Naive thymus-derived CD8-positive, alpha-beta T cell (primary cell): ENCODE measurements at regions of chr17 and their contacts with region 1.

Region 1: DNA sequence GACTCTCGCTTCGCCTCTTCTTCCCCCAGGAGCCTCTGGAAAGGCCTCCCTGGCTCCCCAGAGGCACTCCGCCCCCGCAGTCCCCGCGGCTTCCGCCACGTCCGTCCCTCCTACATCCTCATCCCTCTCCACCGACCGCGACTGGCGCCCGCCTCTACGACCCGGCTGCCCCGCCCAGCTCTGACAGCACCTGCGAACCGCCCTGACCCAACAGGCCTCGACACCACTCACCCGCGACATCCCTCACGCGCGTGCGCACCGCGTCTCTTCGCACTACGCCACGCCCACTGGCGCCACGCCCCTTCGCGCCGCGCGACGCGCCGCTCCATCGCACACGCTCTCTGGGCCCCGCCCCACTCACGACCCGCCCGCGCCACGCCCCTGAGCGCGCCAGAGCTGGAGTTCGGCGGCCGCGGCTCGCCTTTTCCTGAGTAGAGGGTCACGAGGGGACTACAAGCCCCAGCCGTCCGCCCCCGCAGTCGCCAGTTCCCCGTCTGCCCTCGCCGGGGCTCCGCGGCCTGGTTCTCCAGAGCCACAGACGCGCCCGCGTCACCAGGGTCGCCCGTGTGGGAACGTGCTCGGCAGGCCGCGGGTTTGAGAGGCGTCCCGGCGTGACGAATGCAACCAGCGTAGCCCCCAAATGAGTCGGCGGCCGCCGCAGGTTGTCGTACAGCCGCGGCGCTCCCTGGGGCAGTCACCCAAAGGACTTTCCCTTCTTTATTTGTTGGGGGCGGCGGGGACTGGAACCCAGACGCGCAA is 56.2 kb upstream of the LRRC37A3 start:
- DNase-seq: peak; percentile 94 to 98 (median 96)
- ATAC-seq: peak; percentile 76 to 82
- H3K4me3 Mint-ChIP-seq: peak overlapping the region; percentile 90 to 98 (median 96)
- H3K27ac Mint-ChIP-seq: peak overlapping the region; percentile 95 to 100 (median 99)
- H3K4me1 Mint-ChIP-seq: peaks cover 9 to 52% (median 34%) of the 10 kb centered on the region in 4 donors
- H3K27me3 Mint-ChIP-seq: peaks cover 0 to 2% (median 0%) of the 10 kb centered on the region in 5 donors

Region 2: GRCh38 chr17:64920026-64920418 is 55.5 kb before region 1 on chr17:
- POLR2A ChIA-PET with region 1: interaction called, 12 read pairs
- DNase-seq: no peak
- ATAC-seq: peak in 1 of 2 donors; percentile 5
- H3K4me3 Mint-ChIP-seq: peak overlapping the region; percentile 85 to 96 (median 89)
- H3K27ac Mint-ChIP-seq: peak overlapping the region; percentile 77 to 98 (median 96)
- H3K4me1 Mint-ChIP-seq: peaks cover 1 to 31% (median 8%) of the 10 kb centered on the region in 4 donors
- H3K27me3 Mint-ChIP-seq: no peaks in the 10 kb centered on the region

Region 3: DNA sequence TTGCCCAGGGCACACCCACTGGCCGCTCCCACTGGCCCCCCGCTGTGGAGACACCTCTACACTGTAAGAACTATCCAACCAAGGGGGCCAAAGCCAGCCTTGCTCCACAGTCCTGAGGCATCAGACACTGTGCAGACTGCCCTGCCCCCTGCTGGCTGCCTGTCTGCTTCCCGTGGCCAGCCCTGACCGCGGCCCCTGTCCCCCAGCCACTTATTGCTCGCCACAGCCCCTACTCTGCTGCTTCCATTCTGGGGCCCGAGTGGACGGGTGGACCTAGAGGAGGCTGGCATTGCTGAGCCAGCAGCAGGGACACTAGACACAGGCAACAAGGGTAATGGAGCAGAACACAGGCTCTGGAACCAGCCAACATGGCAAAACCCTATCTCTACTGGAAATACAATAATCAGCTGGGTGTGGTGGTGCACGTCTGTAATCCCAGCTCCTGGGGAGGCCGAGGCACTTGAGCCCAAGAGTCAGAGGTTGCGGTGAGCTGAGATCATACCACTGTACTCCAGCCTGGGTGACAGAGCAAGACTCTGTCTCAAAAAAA is 36.5 kb before region 1 on chr17:
- POLR2A ChIA-PET with region 1: no interaction called
- DNase-seq: peak in 5 of 10 donors; percentile 12 to 34 (median 16)
- ATAC-seq: peak; percentile 46 to 54
- H3K4me3 Mint-ChIP-seq: no peak overlapping the region
- H3K27ac Mint-ChIP-seq: no peak overlapping the region
- H3K4me1 Mint-ChIP-seq: peaks cover 0 to 13% (median 3%) of the 10 kb centered on the region in 4 donors
- H3K27me3 Mint-ChIP-seq: peaks cover 0 to 11% (median 0%) of the 10 kb centered on the region in 5 donors

Region 4: GRCh38 chr17:64950871-64951270 is 24.6 kb before region 1 on chr17:
- POLR2A ChIA-PET with region 1: no interaction called
- DNase-seq: no peak
- ATAC-seq: no peak
- H3K4me3 Mint-ChIP-seq: no peak overlapping the region
- H3K27ac Mint-ChIP-seq: no peak overlapping the region
- H3K4me1 Mint-ChIP-seq: no peaks in the 10 kb centered on the region
- H3K27me3 Mint-ChIP-seq: no peaks in the 10 kb centered on the region

Region 5: DNA sequence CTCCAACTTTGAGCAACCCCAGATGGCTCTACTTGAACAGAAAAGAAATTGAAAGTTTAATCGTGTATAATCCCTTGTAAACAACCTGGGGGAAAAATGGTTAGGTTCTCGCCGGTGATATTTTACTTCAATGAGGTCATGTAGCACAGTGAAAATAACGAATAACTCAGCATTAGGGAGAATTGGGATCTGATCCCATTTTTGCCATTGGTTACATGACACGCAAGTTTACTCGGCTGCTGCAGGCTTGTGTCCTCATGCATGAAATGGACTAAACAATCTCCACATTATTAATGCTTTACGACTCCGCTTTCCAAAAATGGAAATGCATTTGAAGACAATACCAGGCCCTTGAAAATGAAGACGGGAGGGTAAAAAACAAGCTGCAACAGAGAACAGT is 10.7 kb before region 1 on chr17:
- POLR2A ChIA-PET with region 1: interaction called, 11 read pairs
- DNase-seq: no peak
- ATAC-seq: no peak
- H3K4me3 Mint-ChIP-seq: peak overlapping the region in 3 of 10 donors; percentile 39 to 73 (median 53)
- H3K27ac Mint-ChIP-seq: peak overlapping the region in 7 of 10 donors; percentile 43 to 96 (median 59)
- H3K4me1 Mint-ChIP-seq: peaks cover 24 to 69% (median 57%) of the 10 kb centered on the region in 4 donors
- H3K27me3 Mint-ChIP-seq: no peaks in the 10 kb centered on the region

Region 6: GRCh38 chr17:64998436-64999190 is 23.1 kb after region 1 on chr17:
- POLR2A ChIA-PET with region 1: no interaction called
- DNase-seq: no peak
- ATAC-seq: no peak
- H3K4me3 Mint-ChIP-seq: no peak overlapping the region
- H3K27ac Mint-ChIP-seq: no peak overlapping the region
- H3K4me1 Mint-ChIP-seq: peaks cover 0 to 6% (median 3%) of the 10 kb centered on the region in 4 donors
- H3K27me3 Mint-ChIP-seq: no peaks in the 10 kb centered on the region

Region 7: GRCh38 chr17:65022751-65023700 is 47.5 kb after region 1 on chr17:
- POLR2A ChIA-PET with region 1: no interaction called
- DNase-seq: no peak
- ATAC-seq: no peak
- H3K4me3 Mint-ChIP-seq: peak overlapping the region in 6 of 10 donors; percentile 24 to 69 (median 42)
- H3K27ac Mint-ChIP-seq: peak overlapping the region in 9 of 10 donors; percentile 13 to 77 (median 66)
- H3K4me1 Mint-ChIP-seq: peaks cover 23 to 94% (median 78%) of the 10 kb centered on the region in 4 donors
- H3K27me3 Mint-ChIP-seq: no peaks in the 10 kb centered on the region

Region 8: DNA sequence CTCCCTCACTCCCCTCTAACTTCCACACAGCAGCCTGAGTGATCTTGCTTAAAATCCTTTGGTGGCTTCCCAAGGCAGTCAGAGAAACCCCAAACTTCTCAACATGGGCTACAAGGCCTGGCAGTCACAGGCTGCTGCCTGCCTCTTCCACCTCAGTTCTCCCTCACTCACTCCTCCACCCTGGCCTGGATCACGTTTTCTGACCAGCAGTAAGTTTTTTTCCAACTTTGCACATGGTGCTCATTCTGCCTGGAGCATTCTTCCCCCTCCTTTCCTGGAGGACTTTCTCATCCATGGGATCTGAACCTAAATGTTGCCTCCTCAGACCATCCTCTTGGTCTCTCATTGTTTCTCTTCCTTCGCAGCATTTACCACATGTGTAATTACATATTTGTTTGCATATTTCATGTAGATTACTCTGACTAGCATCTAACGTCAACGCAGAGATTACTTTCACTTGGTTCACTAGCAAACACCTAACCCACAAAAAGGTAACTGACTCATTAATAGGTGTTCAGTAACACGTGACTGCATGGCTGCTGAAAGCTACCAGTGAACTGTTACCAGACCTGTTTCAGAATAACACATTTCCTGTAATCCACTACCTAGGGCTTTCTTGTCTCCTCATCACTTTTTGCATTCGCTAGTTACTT is 64.0 kb after region 1 on chr17:
- POLR2A ChIA-PET with region 1: interaction called, 16 read pairs
- DNase-seq: peak in 9 of 10 donors; percentile 36 to 75 (median 54)
- ATAC-seq: peak; percentile 92 to 95
- H3K4me3 Mint-ChIP-seq: peak overlapping the region; percentile 55 to 86 (median 76)
- H3K27ac Mint-ChIP-seq: peak overlapping the region; percentile 90 to 99 (median 94)
- H3K4me1 Mint-ChIP-seq: peaks cover 38 to 96% (median 78%) of the 10 kb centered on the region in 4 donors
- H3K27me3 Mint-ChIP-seq: no peaks in the 10 kb centered on the region

Region 9: DNA sequence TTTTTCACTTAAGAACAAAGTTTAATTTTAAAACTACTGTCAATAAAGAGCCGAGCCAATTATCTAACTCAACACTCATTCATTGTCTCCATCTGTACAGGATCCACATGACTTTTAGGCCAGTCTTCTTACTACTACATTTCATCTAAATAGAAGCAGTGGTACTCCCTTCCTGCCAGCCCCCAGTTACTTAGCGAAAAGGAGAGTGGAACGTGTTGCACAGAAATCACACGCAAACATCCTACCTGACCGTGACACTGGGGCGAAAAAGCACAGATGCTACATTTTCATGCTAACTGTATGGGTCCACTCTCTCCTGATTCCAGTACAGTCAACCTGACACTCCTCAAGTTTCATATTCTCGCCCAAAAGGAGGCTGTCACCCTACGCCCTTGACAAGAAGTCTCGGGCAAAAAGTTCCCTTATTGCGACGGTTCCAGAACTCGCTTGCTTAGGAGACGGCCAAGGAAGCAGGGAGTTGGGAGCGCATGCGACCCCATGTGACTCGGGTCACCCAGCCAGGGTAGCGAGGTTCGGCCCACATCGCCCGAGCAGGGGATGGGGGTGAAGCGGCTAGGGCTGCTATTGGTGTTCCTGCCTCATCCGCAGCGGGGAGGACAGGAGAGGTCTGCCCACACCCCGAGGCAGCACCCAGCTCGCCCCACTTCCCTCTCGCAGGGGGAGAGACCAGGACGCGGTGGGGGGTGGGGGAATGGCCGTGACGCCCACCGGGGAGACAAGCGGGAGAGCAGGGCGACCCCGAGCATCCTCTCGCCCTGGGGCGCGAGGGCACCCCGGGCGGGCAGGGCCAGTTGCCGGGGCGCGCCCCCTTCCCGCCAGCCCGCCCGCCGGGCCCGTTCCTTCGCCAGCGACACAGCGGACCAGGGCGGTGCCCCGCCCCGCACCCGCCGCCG is 80.1 kb after region 1 on chr17:
- POLR2A ChIA-PET with region 1: interaction called, 45 read pairs
- DNase-seq: peak; percentile 22 to 67 (median 46)
- ATAC-seq: peak; percentile 33 to 36
- H3K4me3 Mint-ChIP-seq: peak overlapping the region; percentile 91 to 98 (median 95)
- H3K27ac Mint-ChIP-seq: peak overlapping the region; percentile 88 to 99 (median 96)
- H3K4me1 Mint-ChIP-seq: peaks cover 19 to 57% (median 49%) of the 10 kb centered on the region in 4 donors
- H3K27me3 Mint-ChIP-seq: no peaks in the 10 kb centered on the region

Region 10: DNA sequence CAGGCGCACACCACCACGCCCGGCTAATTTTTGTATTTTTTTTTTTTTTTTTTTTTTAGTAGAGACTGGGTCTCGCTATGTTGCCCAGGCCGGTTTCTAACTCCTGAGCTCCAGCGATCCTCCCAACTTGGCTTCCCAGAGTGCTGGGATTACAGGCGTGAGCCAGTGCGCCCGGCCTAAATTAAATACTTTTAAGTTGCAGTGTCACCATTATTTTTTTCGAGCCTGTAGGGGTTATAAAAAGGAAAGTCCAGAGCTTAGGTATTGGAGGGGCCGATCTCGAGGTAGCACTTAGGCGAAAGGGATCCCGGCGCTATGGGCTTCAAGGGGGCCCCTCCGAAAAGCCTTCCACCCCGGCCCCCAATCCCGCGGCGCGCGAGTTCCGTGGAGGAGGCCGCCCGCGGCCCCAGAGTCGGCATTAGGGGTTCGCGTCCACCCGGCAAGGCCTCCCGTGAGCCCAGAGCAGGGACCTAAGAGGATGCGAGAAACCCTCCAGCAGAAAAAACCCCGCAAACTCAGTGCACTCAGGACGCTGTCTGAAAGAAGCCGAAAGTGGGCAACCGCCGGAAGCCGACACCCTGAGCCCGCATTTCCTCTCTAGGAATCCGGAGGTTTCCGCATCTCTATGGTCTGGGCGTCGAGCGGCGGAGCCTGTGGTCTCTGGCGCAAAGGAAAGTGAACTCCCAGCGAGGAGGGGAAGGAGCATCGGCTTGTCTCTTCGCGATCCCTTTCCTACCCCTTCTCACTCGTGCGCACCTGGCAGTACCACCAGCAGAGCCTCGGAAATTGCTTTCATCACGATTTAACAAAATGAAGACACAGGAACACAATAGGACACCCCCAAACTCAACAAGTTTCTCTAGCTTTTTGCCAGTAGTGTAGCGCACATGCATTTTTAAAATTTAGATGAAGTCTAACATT is 147.6 kb after region 1 on chr17:
- POLR2A ChIA-PET with region 1: interaction called, 13 read pairs
- DNase-seq: peak; percentile 57 to 93 (median 82)
- ATAC-seq: peak; percentile 88 to 97
- H3K4me3 Mint-ChIP-seq: peak overlapping the region; percentile 84 to 96 (median 92)
- H3K27ac Mint-ChIP-seq: peak overlapping the region; percentile 96 to 100 (median 98)
- H3K4me1 Mint-ChIP-seq: peaks cover 5 to 24% (median 10%) of the 10 kb centered on the region in 4 donors
- H3K27me3 Mint-ChIP-seq: peaks cover 3 to 6% (median 5%) of the 10 kb centered on the region in 5 donors